Spleen (tissue), 13 donors: ENCODE measurements at regions of chr3 and their contacts with region 1.

Region 1: DNA sequence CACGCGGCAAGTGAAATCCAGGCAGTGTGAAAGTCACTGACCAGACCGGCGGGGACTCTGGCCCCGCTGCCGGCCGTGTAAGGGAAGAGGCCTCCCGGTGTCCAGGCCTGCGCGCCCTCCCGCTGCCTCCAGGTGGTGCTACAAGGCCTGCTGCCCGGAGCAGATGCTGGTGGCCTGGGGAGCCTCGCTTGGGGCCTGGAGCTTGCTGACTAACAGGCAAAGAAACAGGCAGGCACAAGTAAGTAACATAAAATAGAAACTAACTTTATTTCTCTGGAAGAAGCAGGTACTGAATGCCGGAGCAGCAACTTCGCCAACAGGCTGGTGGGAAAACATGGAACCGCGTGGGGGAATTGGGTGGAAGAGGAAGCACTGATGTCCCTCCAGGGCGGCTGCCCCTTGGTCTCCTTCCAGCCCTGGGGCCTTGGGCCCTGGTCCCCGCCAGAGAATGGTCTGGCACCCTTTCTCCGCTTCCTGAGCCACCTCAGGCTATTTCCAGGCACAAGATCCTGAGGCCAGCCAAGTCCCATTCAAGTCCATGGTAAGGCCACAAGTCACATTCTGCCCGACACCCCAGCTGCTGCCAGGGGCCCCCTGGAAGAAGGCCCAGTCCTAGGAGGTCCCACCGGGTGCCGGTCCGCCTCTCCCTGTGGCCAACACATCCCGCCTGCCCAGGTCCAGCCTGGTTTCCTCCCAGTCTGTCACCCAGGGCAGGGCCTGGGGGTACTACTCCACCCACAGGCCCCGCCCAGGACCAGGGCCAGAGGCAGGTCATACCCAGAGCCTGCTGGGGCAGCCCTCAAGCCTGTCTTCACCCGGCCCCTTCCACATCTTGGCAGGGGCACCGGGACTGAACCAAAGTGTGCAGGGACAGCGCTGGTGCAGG is 45.0 kb downstream of the TNK2 start:
- DNase-seq: peak; percentile 93
- H3K4me3 ChIP-seq: no peak overlapping the region
- H3K27ac ChIP-seq: peak overlapping the region in 5 of 8 donors; percentile 10 to 55 (median 13)
- H3K4me1 ChIP-seq: peaks cover 4 to 24% (median 14%) of the 10 kb centered on the region in 6 donors
- H3K27me3 ChIP-seq: no peaks in the 10 kb centered on the region
- CTCF ChIP-seq: peak; percentile 72 to 94 (median 87)
- POLR2A ChIP-seq: no peak

Region 2: GRCh38 chr3:195613468-195614069 is 249.8 kb before region 1 on chr3:
- intact Hi-C with region 1: no loop called
- DNase-seq: no peak
- H3K4me3 ChIP-seq: no peak overlapping the region
- H3K27ac ChIP-seq: no peak overlapping the region
- H3K4me1 ChIP-seq: peaks cover 0 to 8% (median 0%) of the 10 kb centered on the region in 6 donors
- H3K27me3 ChIP-seq: peaks cover 0 to 6% (median 0%) of the 10 kb centered on the region in 7 donors
- CTCF ChIP-seq: no peak
- POLR2A ChIP-seq: no peak

Region 3: DNA sequence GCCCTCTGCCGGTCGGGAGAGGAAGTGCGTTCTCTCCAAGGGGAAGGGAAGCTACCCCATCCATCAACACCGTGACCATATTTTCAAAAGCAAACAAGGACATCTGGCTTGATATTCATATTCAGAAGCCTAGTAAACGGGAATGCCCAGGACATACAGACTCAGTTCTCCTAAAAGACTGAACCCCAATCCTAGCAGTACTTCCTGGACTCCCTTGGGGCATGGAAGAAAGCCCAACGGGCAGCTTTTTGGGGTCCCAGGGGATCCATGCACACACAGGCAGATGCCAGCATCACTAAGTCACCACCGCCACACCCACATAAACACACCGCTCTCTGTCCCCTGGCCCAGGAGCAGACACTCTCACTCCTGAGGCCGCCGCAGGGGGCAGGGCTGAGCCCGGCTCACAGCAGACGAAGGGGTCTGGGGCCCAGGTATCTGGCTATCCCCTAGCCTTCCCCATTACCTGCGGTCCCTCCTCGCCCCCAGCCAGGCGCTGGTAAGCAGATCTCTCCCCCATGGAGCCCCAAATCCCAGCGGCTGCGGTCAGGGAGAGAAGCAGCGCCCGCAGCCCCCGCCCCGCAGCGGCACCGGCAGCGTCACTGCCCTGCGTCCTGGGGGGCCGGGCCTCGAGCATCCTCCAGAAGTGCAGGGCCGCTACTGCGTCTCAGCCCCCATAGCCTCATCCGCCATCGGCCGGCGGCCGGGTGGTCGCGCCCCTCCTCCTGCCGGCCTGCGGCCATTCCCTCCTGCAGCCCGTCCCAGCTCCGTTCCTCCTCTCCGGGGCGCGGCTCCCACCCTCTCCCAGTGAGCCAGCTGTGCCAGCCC is 31.6 kb after region 1 on chr3:
- intact Hi-C with region 1: loop called (anchors 5 kb)
- DNase-seq: peak; percentile 94
- H3K4me3 ChIP-seq: peak overlapping the region; percentile 56 to 95 (median 78)
- H3K27ac ChIP-seq: peak overlapping the region; percentile 85 to 96 (median 92)
- H3K4me1 ChIP-seq: peaks cover 31 to 91% (median 70%) of the 10 kb centered on the region in 6 donors
- H3K27me3 ChIP-seq: no peaks in the 10 kb centered on the region
- CTCF ChIP-seq: peak; percentile 92 to 99 (median 97)
- POLR2A ChIP-seq: no peak